Naive thymus-derived CD4-positive, alpha-beta T cell (primary cell): ENCODE measurements at regions of chr17 and their contacts with region 1.

Region 1: GRCh38 chr17:51120739-51121617 is at the start of gene SPAG9:
- DNase-seq: peak; percentile 87 to 97 (median 92)
- ATAC-seq: peak; percentile 92
- H3K4me3 ChIP-seq: peak within 1 kb of the TSS; percentile 97
- H3K4me3 Mint-ChIP-seq: peak within 1 kb of the TSS; percentile 87 to 99 (median 97)
- H3K27ac ChIP-seq: peak within 1 kb of the TSS; percentile 96
- H3K27ac Mint-ChIP-seq: peak within 1 kb of the TSS; percentile 95 to 100 (median 99)
- H3K4me1 ChIP-seq: peaks cover 28 to 35% of the 10 kb centered on the region in 2 donors
- H3K4me1 Mint-ChIP-seq: peaks cover 27 to 53% (median 49%) of the 10 kb centered on the region in 7 donors
- H3K27me3 ChIP-seq: no peaks in the 10 kb centered on the region
- H3K27me3 Mint-ChIP-seq: no peaks in the 10 kb centered on the region
- total RNA-seq, gene SPAG9: 52.6 to 73.4 (median 54.9) TPM

Region 2: GRCh38 chr17:50707289-50708049 is 413.5 kb before region 1 on chr17 and contains the start of gene ANKRD40:
- CTCF ChIA-PET with region 1: no interaction called
- POLR2A ChIA-PET with region 1: interaction called, 3 read pairs
- intact Hi-C with region 1: loop called in 1 of 2 experiments (anchors 5 kb)
- DNase-seq: peak; percentile 87 to 95 (median 91)
- ATAC-seq: peak; percentile 94
- H3K4me3 ChIP-seq: peak within 1 kb of the TSS; percentile 79
- H3K4me3 Mint-ChIP-seq: peak within 1 kb of the TSS; percentile 88 to 97 (median 93)
- H3K27ac ChIP-seq: peak within 1 kb of the TSS; percentile 88
- H3K27ac Mint-ChIP-seq: peak within 1 kb of the TSS; percentile 93 to 99 (median 97)
- H3K4me1 ChIP-seq: peaks cover 13 to 20% of the 10 kb centered on the region in 2 donors
- H3K4me1 Mint-ChIP-seq: peaks cover 23 to 68% (median 47%) of the 10 kb centered on the region in 7 donors
- H3K27me3 ChIP-seq: no peaks in the 10 kb centered on the region
- H3K27me3 Mint-ChIP-seq: peaks cover 0 to 2% (median 0%) of the 10 kb centered on the region in 5 donors
- total RNA-seq, gene ANKRD40: 27.4 to 37.2 (median 33.4) TPM

Region 3: DNA sequence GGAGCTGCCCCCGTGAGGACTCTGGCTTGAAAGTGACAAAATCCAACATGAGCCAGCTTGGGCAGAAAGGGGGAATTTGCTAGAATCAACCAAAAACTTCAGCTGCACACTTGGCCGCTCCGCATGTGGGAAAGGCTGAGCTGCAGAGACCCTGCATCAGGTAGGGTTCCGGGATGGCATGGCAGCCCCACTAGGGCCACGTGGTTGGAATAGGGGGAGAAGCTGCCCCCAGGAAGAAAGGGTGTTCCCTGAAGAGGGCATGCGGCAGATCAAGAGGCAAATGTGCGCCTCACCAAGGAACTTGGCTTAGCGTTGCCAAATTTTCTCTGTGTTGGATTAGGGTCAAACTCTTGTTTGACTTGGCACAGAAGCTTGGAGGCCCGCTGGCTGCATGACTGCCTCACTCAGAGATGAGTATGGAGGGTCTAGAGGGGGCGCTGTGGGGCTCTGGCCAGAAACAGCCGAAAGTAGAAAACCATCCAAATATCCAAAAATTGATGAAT is 314.8 kb before region 1 on chr17:
- CTCF ChIA-PET with region 1: no interaction called
- POLR2A ChIA-PET with region 1: no interaction called
- intact Hi-C with region 1: no loop called
- DNase-seq: no peak
- ATAC-seq: no peak
- H3K4me3 ChIP-seq: no peak overlapping the region
- H3K4me3 Mint-ChIP-seq: no peak overlapping the region
- H3K27ac ChIP-seq: no peak overlapping the region
- H3K27ac Mint-ChIP-seq: no peak overlapping the region
- H3K4me1 ChIP-seq: no peaks in the 10 kb centered on the region
- H3K4me1 Mint-ChIP-seq: no peaks in the 10 kb centered on the region
- H3K27me3 ChIP-seq: no peaks in the 10 kb centered on the region
- H3K27me3 Mint-ChIP-seq: peaks cover 0 to 8% (median 0%) of the 10 kb centered on the region in 5 donors

Region 4: GRCh38 chr17:51029568-51030463 is 91.2 kb before region 1 on chr17:
- CTCF ChIA-PET with region 1: interaction called, 4 read pairs
- POLR2A ChIA-PET with region 1: no interaction called
- intact Hi-C with region 1: loop called in 1 of 2 experiments (anchors 1 kb)
- DNase-seq: peak in 7 of 9 donors; percentile 17 to 62 (median 54)
- ATAC-seq: peak; percentile 76
- H3K4me3 ChIP-seq: peak overlapping the region; percentile 2
- H3K4me3 Mint-ChIP-seq: peak overlapping the region; percentile 48 to 88 (median 78)
- H3K27ac ChIP-seq: peak overlapping the region; percentile 62
- H3K27ac Mint-ChIP-seq: peak overlapping the region; percentile 89 to 97 (median 93)
- H3K4me1 ChIP-seq: peaks cover 13 to 15% of the 10 kb centered on the region in 2 donors
- H3K4me1 Mint-ChIP-seq: peaks cover 7 to 38% (median 29%) of the 10 kb centered on the region in 7 donors
- H3K27me3 ChIP-seq: no peaks in the 10 kb centered on the region
- H3K27me3 Mint-ChIP-seq: no peaks in the 10 kb centered on the region

Region 5: DNA sequence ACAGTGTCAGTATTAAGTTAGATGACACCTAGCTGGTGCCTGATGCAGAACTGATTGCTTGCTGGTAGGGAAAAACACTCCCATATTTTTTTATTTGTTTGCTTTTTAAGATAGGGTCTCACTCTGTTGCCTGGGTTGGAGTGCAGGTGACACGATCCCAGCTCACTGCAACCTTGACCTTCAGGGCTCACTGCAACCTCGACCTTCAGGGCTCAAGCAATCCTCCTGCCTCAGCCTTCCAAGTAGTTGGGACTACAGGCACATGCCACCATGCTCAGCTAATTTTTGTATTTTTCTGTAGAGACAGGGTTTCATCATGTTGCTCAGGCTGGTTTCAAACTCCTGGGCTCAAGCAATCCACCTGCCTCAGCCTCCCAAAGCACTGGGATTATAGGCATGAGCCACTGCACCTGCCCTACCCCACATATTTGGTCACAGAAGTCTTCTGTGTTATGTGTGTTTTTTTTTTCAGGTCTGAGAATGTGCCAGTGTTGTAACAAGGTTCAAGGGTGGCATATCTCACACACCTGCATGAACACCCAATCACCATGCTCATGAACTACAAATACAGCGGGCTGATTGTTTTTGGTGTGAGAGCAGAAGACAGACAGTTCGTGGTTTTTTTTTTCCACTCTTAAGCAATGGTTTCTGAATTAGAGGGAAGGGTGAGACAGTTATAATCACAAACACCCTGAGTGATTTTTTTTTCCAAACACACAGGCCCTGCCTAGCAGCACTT is 23.1 kb before region 1 on chr17:
- CTCF ChIA-PET with region 1: no interaction called
- POLR2A ChIA-PET with region 1: interaction called, 7 read pairs
- intact Hi-C with region 1: loop called in 1 of 2 experiments (anchors 1 kb)
- DNase-seq: no peak
- ATAC-seq: no peak
- H3K4me3 ChIP-seq: no peak overlapping the region
- H3K4me3 Mint-ChIP-seq: peak overlapping the region in 1 of 10 donors; percentile 23
- H3K27ac ChIP-seq: no peak overlapping the region
- H3K27ac Mint-ChIP-seq: no peak overlapping the region
- H3K4me1 ChIP-seq: peaks cover 11 to 20% of the 10 kb centered on the region in 2 donors
- H3K4me1 Mint-ChIP-seq: peaks cover 12 to 41% (median 35%) of the 10 kb centered on the region in 7 donors
- H3K27me3 ChIP-seq: no peaks in the 10 kb centered on the region
- H3K27me3 Mint-ChIP-seq: no peaks in the 10 kb centered on the region

Region 6: DNA sequence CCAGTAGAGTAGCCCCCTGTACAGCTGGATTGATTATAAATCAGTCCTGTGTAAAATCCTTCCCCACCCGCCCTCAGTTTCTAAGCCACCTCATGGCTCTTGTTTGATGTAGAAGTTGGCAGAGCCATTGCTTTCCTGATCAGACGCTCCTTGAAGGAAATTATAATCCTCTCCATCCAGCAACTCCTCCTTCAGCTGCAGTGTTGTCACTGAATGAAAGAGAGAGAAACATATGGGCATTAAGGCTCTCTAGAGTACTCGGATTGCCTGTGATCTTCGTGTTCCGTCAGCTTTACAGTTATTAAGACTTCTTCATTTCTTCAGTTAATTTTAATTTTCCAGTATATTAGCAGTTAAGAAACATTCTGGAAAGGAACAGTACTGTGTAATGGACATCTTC is 59.5 kb after region 1 on chr17:
- CTCF ChIA-PET with region 1: no interaction called
- POLR2A ChIA-PET with region 1: no interaction called
- intact Hi-C with region 1: no loop called
- DNase-seq: no peak
- ATAC-seq: no peak
- H3K4me3 ChIP-seq: no peak overlapping the region
- H3K4me3 Mint-ChIP-seq: no peak overlapping the region
- H3K27ac ChIP-seq: no peak overlapping the region
- H3K27ac Mint-ChIP-seq: peak overlapping the region in 2 of 9 donors; percentile 43 to 51
- H3K4me1 ChIP-seq: no peaks in the 10 kb centered on the region
- H3K4me1 Mint-ChIP-seq: peaks cover 0 to 2% (median 0%) of the 10 kb centered on the region in 7 donors
- H3K27me3 ChIP-seq: no peaks in the 10 kb centered on the region
- H3K27me3 Mint-ChIP-seq: no peaks in the 10 kb centered on the region

Region 7: DNA sequence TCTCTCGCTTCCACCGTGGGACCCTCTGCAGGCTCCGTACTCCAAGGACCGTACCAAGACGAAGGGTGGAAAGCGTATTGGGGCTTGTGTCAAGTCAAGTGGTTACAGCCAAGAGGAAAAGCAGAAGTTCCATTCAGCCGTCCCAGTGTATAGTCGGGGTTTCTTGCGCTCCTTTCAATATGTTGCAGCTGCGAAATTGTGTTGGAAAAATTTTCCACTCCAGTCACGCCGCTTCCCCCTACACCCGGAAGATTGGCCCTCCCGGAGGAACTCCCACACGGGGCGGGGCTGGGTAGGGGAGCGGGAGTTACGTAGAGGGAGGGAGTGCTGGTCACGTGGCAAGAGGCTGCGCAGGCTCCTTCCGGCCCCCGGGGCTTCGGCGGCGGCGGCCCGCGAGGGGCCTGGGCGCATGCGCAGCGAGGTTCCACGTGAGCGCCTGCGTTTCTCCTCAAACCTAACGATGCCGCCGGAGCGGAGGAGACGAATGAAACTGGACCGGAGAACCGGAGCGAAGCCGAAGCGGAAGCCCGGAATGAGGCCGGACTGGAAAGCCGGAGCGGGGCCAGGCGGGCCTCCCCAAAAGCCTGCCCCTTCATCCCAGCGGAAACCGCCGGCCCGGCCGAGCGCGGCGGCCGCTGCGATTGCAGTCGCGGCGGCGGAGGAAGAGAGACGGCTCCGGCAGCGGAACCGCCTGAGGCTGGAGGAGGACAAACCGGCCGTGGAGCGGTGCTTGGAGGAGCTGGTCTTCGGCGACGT is 139.3 kb after region 1 on chr17 and contains the start of gene UTP18:
- CTCF ChIA-PET with region 1: no interaction called
- POLR2A ChIA-PET with region 1: interaction called, 4 read pairs
- intact Hi-C with region 1: loop called (anchors 1 kb)
- DNase-seq: peak; percentile 91 to 98 (median 97)
- ATAC-seq: peak; percentile 92
- H3K4me3 ChIP-seq: peak within 1 kb of the TSS; percentile 89
- H3K4me3 Mint-ChIP-seq: peak within 1 kb of the TSS; percentile 88 to 98 (median 96)
- H3K27ac ChIP-seq: peak within 1 kb of the TSS; percentile 89
- H3K27ac Mint-ChIP-seq: peak within 1 kb of the TSS; percentile 96 to 99 (median 98)
- H3K4me1 ChIP-seq: peaks cover 35 to 36% of the 10 kb centered on the region in 2 donors
- H3K4me1 Mint-ChIP-seq: peaks cover 45 to 80% (median 61%) of the 10 kb centered on the region in 7 donors
- H3K27me3 ChIP-seq: no peaks in the 10 kb centered on the region
- H3K27me3 Mint-ChIP-seq: no peaks in the 10 kb centered on the region
- total RNA-seq, gene UTP18: 31.1 to 46.2 (median 45.5) TPM